ENCODE measurements at regions of chr20 and their contacts with region 1.

Region 1: GRCh38 chr20:57351042-57351783 is at the start of gene RAE1:
- DNase-seq: peak; percentile 82
- ATAC-seq: peak; percentile 86
- H3K4me3 Mint-ChIP-seq: peak within 1 kb of the TSS; percentile 90
- H3K27ac Mint-ChIP-seq: peak within 1 kb of the TSS; percentile 79
- H3K4me1 Mint-ChIP-seq: peaks cover 17% of the 10 kb centered on the region
- H3K27me3 Mint-ChIP-seq: peaks cover 3% of the 10 kb centered on the region
- CTCF ChIP-seq: no peak
- total RNA-seq, gene RAE1: 35.7 and 36.6 TPM in 2 replicates

Region 2: GRCh38 chr20:56392282-56393137 is 958.7 kb before region 1 on chr20 and contains the start of gene CSTF1:
- CTCF ChIA-PET with region 1: no interaction called
- POLR2A ChIA-PET with region 1: no interaction called
- intact Hi-C with region 1: loop called (anchors 2 kb)
- DNase-seq: peak; percentile 96
- ATAC-seq: peak; percentile 93
- H3K4me3 Mint-ChIP-seq: no peak within 1 kb of the TSS
- H3K27ac Mint-ChIP-seq: no peak within 1 kb of the TSS
- H3K4me1 Mint-ChIP-seq: peaks cover 22% of the 10 kb centered on the region
- H3K27me3 Mint-ChIP-seq: no peaks in the 10 kb centered on the region
- CTCF ChIP-seq: no peak
- total RNA-seq, gene CSTF1: 31.4 and 36.2 TPM in 2 replicates

Region 3: GRCh38 chr20:56468316-56469082 is 882.7 kb before region 1 on chr20 and contains the start of gene RTF2:
- CTCF ChIA-PET with region 1: no interaction called
- POLR2A ChIA-PET with region 1: no interaction called
- intact Hi-C with region 1: loop called (anchors 2 kb)
- DNase-seq: peak; percentile 99
- ATAC-seq: peak; percentile 93
- H3K4me3 Mint-ChIP-seq: peak within 1 kb of the TSS; percentile 100
- H3K27ac Mint-ChIP-seq: peak within 1 kb of the TSS; percentile 99
- H3K4me1 Mint-ChIP-seq: peaks cover 44% of the 10 kb centered on the region
- H3K27me3 Mint-ChIP-seq: no peaks in the 10 kb centered on the region
- CTCF ChIP-seq: no peak
- total RNA-seq, gene RTF2: 81.0 and 81.1 TPM in 2 replicates

Region 4: DNA sequence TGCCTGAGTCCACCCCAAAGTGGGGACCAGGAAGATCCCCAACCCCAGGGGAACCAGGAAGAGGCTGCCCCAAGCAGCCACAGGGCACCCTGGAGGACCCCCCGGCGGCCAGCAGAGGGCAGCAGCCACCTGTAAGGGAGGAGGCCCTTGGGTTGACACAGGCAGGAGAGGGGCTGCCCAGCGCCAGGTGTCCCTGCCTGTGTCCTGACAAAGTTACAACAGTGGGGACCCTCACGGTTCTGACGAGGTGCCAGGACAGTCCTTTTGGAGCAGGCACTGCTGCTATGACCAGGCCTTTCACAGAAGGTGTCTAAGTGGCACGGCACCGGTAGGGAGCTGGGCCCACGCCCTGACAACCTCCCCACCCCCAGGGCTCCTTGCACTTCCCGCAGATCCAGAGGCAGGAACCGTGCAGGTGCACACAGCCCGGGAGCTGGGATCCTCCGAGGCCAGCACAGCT is 261.5 kb before region 1 on chr20:
- CTCF ChIA-PET with region 1: interaction called, 3 read pairs
- POLR2A ChIA-PET with region 1: no interaction called
- intact Hi-C with region 1: loop called (anchors 1 kb)
- DNase-seq: peak; percentile 31
- ATAC-seq: peak; percentile 47
- H3K4me3 Mint-ChIP-seq: no peak overlapping the region
- H3K27ac Mint-ChIP-seq: no peak overlapping the region
- H3K4me1 Mint-ChIP-seq: peaks cover 4% of the 10 kb centered on the region
- H3K27me3 Mint-ChIP-seq: peaks cover 7% of the 10 kb centered on the region
- CTCF ChIP-seq: no peak

Region 5: DNA sequence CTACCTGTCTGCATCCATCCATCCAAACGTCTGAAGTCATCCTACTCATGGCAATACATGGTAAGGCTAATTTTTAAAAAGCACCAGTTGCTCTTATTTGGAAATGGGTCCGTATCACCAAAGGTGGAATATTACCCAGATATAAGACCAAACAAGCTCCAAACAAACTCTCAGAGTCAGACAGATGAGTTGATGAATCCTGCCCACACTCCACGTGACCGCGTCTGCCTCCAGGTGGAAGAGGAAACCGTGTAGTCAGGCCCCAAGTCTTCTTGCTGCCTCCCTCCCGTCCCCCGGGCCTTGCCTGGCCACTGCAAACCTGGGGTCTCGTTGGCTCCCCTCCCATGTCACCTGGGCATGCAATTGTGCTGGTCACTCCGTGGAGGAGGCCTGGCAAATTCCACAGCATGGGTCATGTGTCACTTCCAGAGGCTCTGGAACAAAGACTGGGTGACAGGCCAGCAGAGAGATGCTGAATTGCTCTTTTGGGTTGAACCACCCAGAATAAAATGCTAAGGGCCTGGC is 141.9 kb after region 1 on chr20:
- CTCF ChIA-PET with region 1: no interaction called
- POLR2A ChIA-PET with region 1: no interaction called
- intact Hi-C with region 1: no loop called
- DNase-seq: no peak
- ATAC-seq: no peak
- H3K4me3 Mint-ChIP-seq: no peak overlapping the region
- H3K27ac Mint-ChIP-seq: no peak overlapping the region
- H3K4me1 Mint-ChIP-seq: peaks cover 35% of the 10 kb centered on the region
- H3K27me3 Mint-ChIP-seq: no peaks in the 10 kb centered on the region
- CTCF ChIP-seq: no peak

Region 6: GRCh38 chr20:58388882-58389323 is 1037.7 kb after region 1 on chr20 and contains the start of gene VAPB:
- CTCF ChIA-PET with region 1: no interaction called
- POLR2A ChIA-PET with region 1: no interaction called
- intact Hi-C with region 1: loop called (anchors 10 kb)
- DNase-seq: peak; percentile 99
- ATAC-seq: peak; percentile 97
- H3K4me3 Mint-ChIP-seq: peak within 1 kb of the TSS; percentile 91
- H3K27ac Mint-ChIP-seq: peak within 1 kb of the TSS; percentile 85
- H3K4me1 Mint-ChIP-seq: peaks cover 37% of the 10 kb centered on the region
- H3K27me3 Mint-ChIP-seq: peaks cover 4% of the 10 kb centered on the region
- CTCF ChIP-seq: no peak
- total RNA-seq, gene VAPB: 20.6 and 26.2 TPM in 2 replicates